GM10248 (cell line): ENCODE measurements at regions of chr2 and their contacts with region 1.

Region 1: DNA sequence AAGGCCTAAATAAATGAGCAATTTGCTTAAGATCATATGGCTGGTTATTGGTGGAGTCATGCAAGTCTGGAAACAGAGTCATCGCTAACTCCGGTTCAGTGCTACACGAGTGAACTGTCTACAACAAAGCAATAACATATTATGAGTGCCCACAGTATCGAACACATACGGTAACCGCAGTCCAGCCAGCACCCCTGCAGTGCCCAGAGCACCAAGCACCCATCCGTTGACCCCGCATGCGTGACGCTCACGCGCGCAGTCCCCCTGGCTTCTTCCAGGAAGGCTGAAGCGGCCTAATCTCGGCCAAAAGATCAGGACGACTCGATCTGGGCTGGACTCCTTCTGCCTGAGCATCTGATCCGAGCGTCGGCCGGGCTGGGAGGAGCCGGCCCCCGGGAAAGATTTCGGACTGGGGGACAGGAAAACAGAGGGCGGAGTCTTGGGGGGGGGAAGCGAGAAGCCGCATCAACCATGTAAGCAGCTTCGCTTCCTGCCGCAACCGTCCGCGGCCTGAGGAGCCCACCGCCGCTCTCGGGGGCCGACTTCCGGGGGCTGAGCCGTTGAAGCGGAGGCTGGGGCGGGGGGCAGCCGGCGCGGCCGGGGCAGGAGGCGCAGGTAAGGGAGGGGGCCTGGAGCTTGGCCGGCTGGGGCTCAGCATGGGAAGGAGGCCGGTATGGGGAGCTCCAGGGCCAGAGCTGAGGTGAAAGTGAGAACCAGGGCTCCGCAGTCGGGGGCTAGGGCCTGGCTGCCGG is at the start of gene PIKFYVE:
- DNase-seq: peak; percentile 96
- CTCF ChIP-seq: no peak

Region 2: GRCh38 chr2:208280933-208281332 is 15.0 kb after region 1 on chr2:
- CTCF ChIA-PET with region 1: interaction called, 10 read pairs
- POLR2A ChIA-PET with region 1: interaction called, 3 read pairs
- DNase-seq: no peak
- CTCF ChIP-seq: no peak

Region 3: DNA sequence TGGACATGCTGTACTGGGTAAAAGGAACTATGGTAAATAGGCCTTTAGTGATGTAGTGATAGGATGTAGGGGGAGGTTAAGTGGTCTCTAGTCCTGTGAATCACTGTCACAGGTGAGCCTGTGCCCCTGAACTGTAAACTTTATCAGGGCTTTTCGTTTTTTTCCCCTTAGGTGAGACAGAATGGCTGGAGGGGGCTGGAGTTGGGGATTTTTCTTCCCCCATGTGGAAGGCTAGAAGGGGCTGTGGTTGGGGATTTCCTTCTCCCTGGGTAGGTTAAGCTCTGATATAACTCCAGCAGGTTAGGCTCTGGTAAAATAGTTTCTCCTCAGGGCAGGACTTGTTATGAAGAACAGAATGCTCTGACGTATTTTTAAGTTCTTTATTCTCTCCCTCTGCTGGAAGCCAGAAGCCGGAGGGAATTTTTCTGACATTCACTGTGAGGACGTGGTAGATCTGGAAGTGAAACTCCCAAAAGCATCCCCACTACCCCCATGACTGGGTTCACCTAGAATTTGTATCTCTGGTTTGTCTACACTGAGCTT is 28.6 kb after region 1 on chr2:
- CTCF ChIA-PET with region 1: no interaction called
- POLR2A ChIA-PET with region 1: no interaction called
- DNase-seq: no peak
- CTCF ChIP-seq: no peak